K562 (cell line): ENCODE measurements at regions of chr18 and their contacts with region 1.

Region 1: GRCh38 chr18:9156604-9157249 is 20.1 kb downstream of the ANKRD12 start:
- DNase-seq: no peak
- ATAC-seq: no peak; the same call in 2 of the 3 replicates
- H3K4me3 ChIP-seq: no peak overlapping the region
- H3K27ac ChIP-seq: no peak overlapping the region
- H3K4me1 ChIP-seq: peaks cover 0 to 5% of the 10 kb centered on the region in 2 experiments; a peak in 1 of 5 replicates
- H3K27me3 ChIP-seq: no peaks in the 10 kb centered on the region
- CTCF ChIP-seq: no peak
- EP300 ChIP-seq: no peak
- POLR2A ChIP-seq: no peak
- RAD21 ChIP-seq: no peak

Region 2: DNA sequence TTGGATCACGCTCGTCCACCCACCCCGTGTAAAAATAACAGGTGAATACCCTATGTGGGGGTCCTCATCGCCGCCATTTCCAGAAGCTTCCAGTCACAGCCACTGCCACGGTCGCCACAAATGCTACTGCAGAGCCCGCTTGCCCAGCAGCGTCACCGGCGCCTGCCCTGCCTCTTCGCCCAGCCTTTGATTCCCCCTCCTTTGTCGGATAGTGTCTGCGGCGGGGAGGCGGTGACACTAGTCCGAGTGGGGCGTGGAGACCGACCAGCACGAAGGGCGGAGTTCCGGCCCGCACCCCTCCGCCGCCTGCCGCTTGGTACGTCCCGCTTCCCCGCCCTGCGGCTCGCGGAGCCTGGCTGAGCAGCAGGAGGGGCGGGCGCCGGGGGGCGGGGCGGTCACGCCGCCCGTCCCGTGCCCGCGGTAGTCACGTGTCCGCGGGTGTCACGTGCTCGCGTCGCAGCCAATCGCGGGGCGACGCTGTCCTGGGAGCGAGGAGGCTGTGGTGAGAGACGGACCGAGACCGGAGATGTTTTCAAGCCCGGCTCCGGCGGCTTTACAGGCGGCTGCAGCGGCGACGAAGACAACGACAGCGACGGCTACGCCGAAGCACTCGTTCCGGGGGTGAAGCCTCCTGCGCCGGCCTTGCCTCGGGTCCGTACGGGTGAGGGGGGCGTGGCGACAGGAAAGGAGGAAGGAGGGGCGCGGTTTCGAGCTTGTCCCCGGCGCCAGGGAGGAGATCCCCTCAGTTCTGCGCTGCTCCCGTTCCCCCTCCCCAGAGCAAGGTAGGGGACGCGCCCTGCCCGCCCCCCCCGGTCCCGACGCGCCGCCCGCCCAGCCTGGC is 20.2 kb before region 1 on chr18 and contains the start of gene ANKRD12:
- CTCF ChIA-PET with region 1: no interaction called
- POLR2A ChIA-PET with region 1: interaction called, 10 read pairs
- in situ Hi-C with region 1: no loop called
- intact Hi-C with region 1: no loop called
- DNase-seq: peak; percentile 98 to 99 (median 99)
- ATAC-seq: peak; percentile 86
- H3K4me3 ChIP-seq: peak within 1 kb of the TSS; percentile 75
- H3K27ac ChIP-seq: peak within 1 kb of the TSS; percentile 90
- H3K4me1 ChIP-seq: peaks cover 9 to 14% of the 10 kb centered on the region in 2 experiments; a peak in 4 of 5 replicates
- H3K27me3 ChIP-seq: no peaks in the 10 kb centered on the region
- CTCF ChIP-seq: no peak
- EP300 ChIP-seq: peak; percentile 61
- POLR2A ChIP-seq: peak; percentile 82
- RAD21 ChIP-seq: no peak
- polyA plus RNA-seq, gene ANKRD12: 12.3 to 15.7 TPM

Region 3: DNA sequence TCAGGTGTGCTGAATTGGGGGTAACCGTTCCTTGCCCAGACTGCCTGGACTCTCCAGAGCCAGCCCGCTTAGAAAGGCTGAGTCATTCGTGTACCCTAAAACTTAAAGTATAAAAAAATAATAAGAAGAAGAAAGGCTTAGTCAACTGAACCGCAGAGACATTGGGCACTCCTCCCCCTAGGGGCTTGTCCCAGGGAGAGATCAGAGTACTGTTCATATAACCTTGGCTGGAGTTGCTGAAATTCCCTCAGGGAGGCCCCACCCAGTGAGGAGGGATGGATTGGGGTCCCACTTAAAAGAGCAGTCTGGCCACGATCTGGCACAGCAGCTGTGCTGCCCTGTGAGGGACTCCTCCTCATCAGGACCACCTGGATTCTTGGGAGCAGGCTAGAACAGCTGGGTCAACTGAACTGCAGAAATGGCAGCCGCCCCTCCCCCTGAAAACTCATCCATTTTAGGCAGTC is 17.1 kb after region 1 on chr18:
- CTCF ChIA-PET with region 1: no interaction called
- POLR2A ChIA-PET with region 1: interaction called, 11 read pairs
- in situ Hi-C with region 1: no loop called
- intact Hi-C with region 1: no loop called
- DNase-seq: no peak
- ATAC-seq: peak; percentile 52
- H3K4me3 ChIP-seq: no peak overlapping the region
- H3K27ac ChIP-seq: no peak overlapping the region
- H3K4me1 ChIP-seq: peaks cover 6 to 9% of the 10 kb centered on the region in 2 experiments; a peak in 3 of 5 replicates
- H3K27me3 ChIP-seq: no peaks in the 10 kb centered on the region
- CTCF ChIP-seq: no peak
- EP300 ChIP-seq: no peak
- POLR2A ChIP-seq: no peak
- RAD21 ChIP-seq: no peak